SK-N-SH (cell line): ENCODE measurements at regions of chr3 and their contacts with region 1.

Region 1: GRCh38 chr3:76044601-76045600 is 259.6 kb upstream of the ZNF717 start:
- DNase-seq: peak; percentile 27
- H3K4me3 ChIP-seq: no peak overlapping the region
- H3K27ac ChIP-seq: no peak overlapping the region
- H3K4me1 ChIP-seq: peaks cover 4 to 5% of the 10 kb centered on the region in 2 experiments; a peak in 3 of 4 replicates
- H3K27me3 ChIP-seq: no peaks in the 10 kb centered on the region
- CTCF ChIP-seq: peak; percentile 73
- EP300 ChIP-seq: no peak
- RAD21 ChIP-seq: peak; percentile 62

Region 2: GRCh38 chr3:75814797-75815196 is 230.1 kb before region 1 on chr3:
- CTCF ChIA-PET with region 1: interaction called, 10 read pairs
- POLR2A ChIA-PET with region 1: no interaction called
- DNase-seq: no peak
- H3K4me3 ChIP-seq: no peak overlapping the region
- H3K27ac ChIP-seq: no peak overlapping the region
- H3K4me1 ChIP-seq: no peaks in the 10 kb centered on the region; a peak in 2 of 4 replicates
- H3K27me3 ChIP-seq: no peaks in the 10 kb centered on the region
- CTCF ChIP-seq: no peak
- EP300 ChIP-seq: no peak
- RAD21 ChIP-seq: no peak

Region 3: DNA sequence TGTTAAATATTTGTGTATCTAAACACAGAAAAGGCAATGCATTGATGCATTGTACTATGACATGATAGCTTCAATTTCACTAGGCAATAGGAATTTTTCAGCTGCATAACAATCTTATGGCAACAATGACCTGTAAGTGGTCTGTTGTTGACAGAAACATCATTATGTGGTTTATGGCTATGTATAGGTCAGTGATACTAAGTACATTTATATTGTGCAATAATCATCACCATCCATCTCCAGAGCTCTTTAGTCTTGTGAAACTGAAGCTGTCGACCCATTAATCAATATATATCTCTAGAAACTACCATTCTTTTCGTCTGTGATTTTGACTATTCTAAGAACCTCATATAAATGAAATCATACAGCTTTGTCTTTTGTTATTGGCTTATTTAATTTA is 59.5 kb before region 1 on chr3:
- CTCF ChIA-PET with region 1: no interaction called
- POLR2A ChIA-PET with region 1: no interaction called
- DNase-seq: no peak
- H3K4me3 ChIP-seq: no peak overlapping the region
- H3K27ac ChIP-seq: no peak overlapping the region
- H3K4me1 ChIP-seq: no peaks in the 10 kb centered on the region
- H3K27me3 ChIP-seq: no peaks in the 10 kb centered on the region
- CTCF ChIP-seq: no peak
- EP300 ChIP-seq: no peak
- RAD21 ChIP-seq: no peak

Region 4: GRCh38 chr3:76024640-76025039 is 20.3 kb before region 1 on chr3:
- CTCF ChIA-PET with region 1: interaction called, 33 read pairs
- POLR2A ChIA-PET with region 1: no interaction called
- DNase-seq: peak; percentile 10
- H3K4me3 ChIP-seq: no peak overlapping the region
- H3K27ac ChIP-seq: no peak overlapping the region
- H3K4me1 ChIP-seq: no peaks in the 10 kb centered on the region; a peak in 1 of 4 replicates
- H3K27me3 ChIP-seq: no peaks in the 10 kb centered on the region
- CTCF ChIP-seq: peak; percentile 53
- EP300 ChIP-seq: no peak
- RAD21 ChIP-seq: peak; percentile 81

Region 5: DNA sequence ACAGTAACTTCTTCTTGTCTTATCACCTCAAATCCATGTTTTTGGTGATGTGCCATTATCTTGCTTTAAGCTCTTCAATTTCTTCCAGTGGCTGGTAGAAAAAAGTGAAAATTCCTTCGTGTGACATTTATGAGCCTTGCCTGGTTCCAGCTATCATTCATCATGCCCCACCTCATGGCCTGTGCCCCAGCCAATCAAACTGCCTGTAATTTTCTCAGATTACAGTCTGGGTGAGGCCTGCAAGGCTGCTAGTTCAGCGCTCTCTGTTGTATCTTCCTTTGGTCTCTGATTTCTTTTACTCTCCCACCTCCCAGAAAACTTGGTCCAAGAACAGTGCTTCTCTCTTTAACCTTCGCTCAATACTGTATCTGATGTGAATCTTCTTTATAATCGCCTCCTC is 10.2 kb before region 1 on chr3:
- CTCF ChIA-PET with region 1: interaction called, 20 read pairs
- POLR2A ChIA-PET with region 1: no interaction called
- DNase-seq: no peak
- H3K4me3 ChIP-seq: no peak overlapping the region
- H3K27ac ChIP-seq: no peak overlapping the region
- H3K4me1 ChIP-seq: no peaks in the 10 kb centered on the region
- H3K27me3 ChIP-seq: no peaks in the 10 kb centered on the region
- CTCF ChIP-seq: no peak
- EP300 ChIP-seq: no peak
- RAD21 ChIP-seq: no peak

Region 6: GRCh38 chr3:76063019-76063418 is 18.1 kb after region 1 on chr3:
- CTCF ChIA-PET with region 1: interaction called, 29 read pairs
- POLR2A ChIA-PET with region 1: no interaction called
- DNase-seq: no peak
- H3K4me3 ChIP-seq: no peak overlapping the region
- H3K27ac ChIP-seq: no peak overlapping the region
- H3K4me1 ChIP-seq: no peaks in the 10 kb centered on the region; a peak in 1 of 4 replicates
- H3K27me3 ChIP-seq: no peaks in the 10 kb centered on the region
- CTCF ChIP-seq: no peak
- EP300 ChIP-seq: no peak
- RAD21 ChIP-seq: no peak

Region 7: GRCh38 chr3:76570436-76571057 is 525.6 kb after region 1 on chr3:
- CTCF ChIA-PET with region 1: interaction called, 11 read pairs
- POLR2A ChIA-PET with region 1: no interaction called
- DNase-seq: peak; percentile 20
- H3K4me3 ChIP-seq: no peak overlapping the region; a peak in 1 of 4 replicates
- H3K27ac ChIP-seq: no peak overlapping the region
- H3K4me1 ChIP-seq: no peaks in the 10 kb centered on the region; a peak in 1 of 4 replicates
- H3K27me3 ChIP-seq: no peaks in the 10 kb centered on the region
- CTCF ChIP-seq: peak; percentile 89
- EP300 ChIP-seq: no peak
- RAD21 ChIP-seq: peak; percentile 76